ENCODE measurements at regions of chr14 and their contacts with region 1.

Region 1: GRCh38 chr14:45810152-45810872 is 557.3 kb upstream of the MIS18BP1 start:
- DNase-seq: peak in 1 of 2 experiments; percentile 13
- H3K4me3 ChIP-seq: no peak overlapping the region
- H3K4me3 Mint-ChIP-seq: no peak overlapping the region
- H3K27ac Mint-ChIP-seq: no peak overlapping the region
- H3K4me1 ChIP-seq: no peaks in the 10 kb centered on the region
- H3K4me1 Mint-ChIP-seq: no peaks in the 10 kb centered on the region
- H3K27me3 ChIP-seq: no peaks in the 10 kb centered on the region
- H3K27me3 Mint-ChIP-seq: no peaks in the 10 kb centered on the region
- CTCF ChIP-seq: peak in 1 of 2 experiments; percentile 10

Region 2: GRCh38 chr14:45610318-45610717 is 200.0 kb before region 1 on chr14:
- CTCF ChIA-PET with region 1: no interaction called
- POLR2A ChIA-PET with region 1: no interaction called
- intact Hi-C with region 1: loop called (anchors 1 kb)
- DNase-seq: no peak
- H3K4me3 ChIP-seq: no peak overlapping the region
- H3K4me3 Mint-ChIP-seq: no peak overlapping the region
- H3K27ac Mint-ChIP-seq: no peak overlapping the region
- H3K4me1 ChIP-seq: no peaks in the 10 kb centered on the region
- H3K4me1 Mint-ChIP-seq: no peaks in the 10 kb centered on the region
- H3K27me3 ChIP-seq: no peaks in the 10 kb centered on the region
- H3K27me3 Mint-ChIP-seq: no peaks in the 10 kb centered on the region
- CTCF ChIP-seq: peak in 1 of 2 experiments; percentile 18

Region 3: GRCh38 chr14:45716572-45716971 is 93.7 kb before region 1 on chr14:
- CTCF ChIA-PET with region 1: interaction called, 3 read pairs
- POLR2A ChIA-PET with region 1: no interaction called
- intact Hi-C with region 1: loop called (anchors 1 kb)
- DNase-seq: peak in 1 of 2 experiments; percentile 30
- H3K4me3 ChIP-seq: no peak overlapping the region
- H3K4me3 Mint-ChIP-seq: no peak overlapping the region
- H3K27ac Mint-ChIP-seq: no peak overlapping the region
- H3K4me1 ChIP-seq: no peaks in the 10 kb centered on the region
- H3K4me1 Mint-ChIP-seq: no peaks in the 10 kb centered on the region
- H3K27me3 ChIP-seq: no peaks in the 10 kb centered on the region
- H3K27me3 Mint-ChIP-seq: no peaks in the 10 kb centered on the region
- CTCF ChIP-seq: peak; percentile 25 to 44

Region 4: GRCh38 chr14:46230540-46230939 is 420.2 kb after region 1 on chr14:
- CTCF ChIA-PET with region 1: no interaction called
- POLR2A ChIA-PET with region 1: no interaction called
- intact Hi-C with region 1: no loop called
- DNase-seq: no peak
- H3K4me3 ChIP-seq: no peak overlapping the region
- H3K4me3 Mint-ChIP-seq: no peak overlapping the region
- H3K27ac Mint-ChIP-seq: no peak overlapping the region
- H3K4me1 ChIP-seq: no peaks in the 10 kb centered on the region
- H3K4me1 Mint-ChIP-seq: no peaks in the 10 kb centered on the region
- H3K27me3 ChIP-seq: no peaks in the 10 kb centered on the region
- H3K27me3 Mint-ChIP-seq: no peaks in the 10 kb centered on the region
- CTCF ChIP-seq: no peak

Measured in Caco-2 (cell line).